ENCODE measurements at regions of chr11 and their contacts with region 1.

Region 1: GRCh38 chr11:2186669-2187279 is 15.2 kb upstream of the TH start:
- DNase-seq: no peak
- ATAC-seq: peak; percentile 85
- H3K4me3 ChIP-seq: no peak overlapping the region
- H3K27ac ChIP-seq: no peak overlapping the region
- H3K4me1 ChIP-seq: 0 out of 2 replicates have a peak, but pooled peaks cover 3% of the 10 kb centered on the region
- H3K27me3 ChIP-seq: no peaks in the 10 kb centered on the region
- CTCF ChIP-seq: peak; percentile 97

Region 2: DNA sequence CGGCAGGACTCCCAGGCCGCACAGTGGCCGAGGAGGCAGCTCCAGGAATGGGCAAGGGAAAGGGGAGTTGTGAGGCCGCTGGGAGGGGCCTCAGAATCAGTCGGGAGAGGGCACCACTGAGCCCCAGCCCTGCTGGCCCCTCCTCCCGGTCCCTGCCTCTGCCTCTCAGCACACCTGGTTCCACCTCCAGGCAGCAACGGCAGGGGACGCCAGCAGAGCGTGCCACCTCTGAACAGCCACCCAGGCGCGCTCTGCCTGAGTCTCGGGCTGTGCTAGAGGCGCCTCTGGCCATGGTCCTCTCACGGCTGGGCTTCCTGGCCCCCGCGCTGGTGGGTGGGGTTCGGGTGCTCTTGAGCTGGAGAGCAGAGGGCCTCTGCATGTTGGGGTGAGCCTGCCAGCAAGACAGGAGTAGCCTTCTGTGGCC is 733.2 kb before region 1 on chr11:
- CTCF ChIA-PET with region 1: no interaction called
- POLR2A ChIA-PET with region 1: no interaction called
- in situ Hi-C with region 1: no loop called
- intact Hi-C with region 1: no loop called
- DNase-seq: no peak
- ATAC-seq: 0 out of 2 replicates have a peak, but pooled peaks have one; percentile 4
- H3K4me3 ChIP-seq: no peak overlapping the region
- H3K27ac ChIP-seq: no peak overlapping the region
- H3K4me1 ChIP-seq: peaks cover 27% of the 10 kb centered on the region
- H3K27me3 ChIP-seq: no peaks in the 10 kb centered on the region
- CTCF ChIP-seq: peak; percentile 66

Region 3: GRCh38 chr11:2128130-2128510 is 58.7 kb before region 1 on chr11:
- CTCF ChIA-PET with region 1: no interaction called
- POLR2A ChIA-PET with region 1: no interaction called
- in situ Hi-C with region 1: no loop called
- intact Hi-C with region 1: no loop called
- DNase-seq: no peak
- ATAC-seq: peak; percentile 26; the same call in 1 of the 2 replicates
- H3K4me3 ChIP-seq: no peak overlapping the region
- H3K27ac ChIP-seq: no peak overlapping the region
- H3K4me1 ChIP-seq: no peaks in the 10 kb centered on the region; the same call in 1 of the 2 replicates
- H3K27me3 ChIP-seq: no peaks in the 10 kb centered on the region
- CTCF ChIP-seq: no peak

Region 4: GRCh38 chr11:2377511-2378443 is 191.0 kb after region 1 on chr11:
- CTCF ChIA-PET with region 1: no interaction called
- POLR2A ChIA-PET with region 1: interaction called, 11 read pairs
- in situ Hi-C with region 1: no loop called
- intact Hi-C with region 1: no loop called
- DNase-seq: no peak
- ATAC-seq: peak; percentile 55
- H3K4me3 ChIP-seq: peak overlapping the region; percentile 93 to 94
- H3K27ac ChIP-seq: peak overlapping the region; percentile 85
- H3K4me1 ChIP-seq: peaks cover 32% of the 10 kb centered on the region
- H3K27me3 ChIP-seq: no peaks in the 10 kb centered on the region; the same call in 1 of the 2 replicates
- CTCF ChIP-seq: no peak